Activated naive CD8-positive, alpha-beta T cell treated with anti-CD3 and anti-CD28 coated beads, Interleukin-2, amount 10 ng/mL, durations not matched to agents 7 days and 5 days (primary cell): ENCODE measurements at regions of chr9 and their contacts with region 1.

Region 1: DNA sequence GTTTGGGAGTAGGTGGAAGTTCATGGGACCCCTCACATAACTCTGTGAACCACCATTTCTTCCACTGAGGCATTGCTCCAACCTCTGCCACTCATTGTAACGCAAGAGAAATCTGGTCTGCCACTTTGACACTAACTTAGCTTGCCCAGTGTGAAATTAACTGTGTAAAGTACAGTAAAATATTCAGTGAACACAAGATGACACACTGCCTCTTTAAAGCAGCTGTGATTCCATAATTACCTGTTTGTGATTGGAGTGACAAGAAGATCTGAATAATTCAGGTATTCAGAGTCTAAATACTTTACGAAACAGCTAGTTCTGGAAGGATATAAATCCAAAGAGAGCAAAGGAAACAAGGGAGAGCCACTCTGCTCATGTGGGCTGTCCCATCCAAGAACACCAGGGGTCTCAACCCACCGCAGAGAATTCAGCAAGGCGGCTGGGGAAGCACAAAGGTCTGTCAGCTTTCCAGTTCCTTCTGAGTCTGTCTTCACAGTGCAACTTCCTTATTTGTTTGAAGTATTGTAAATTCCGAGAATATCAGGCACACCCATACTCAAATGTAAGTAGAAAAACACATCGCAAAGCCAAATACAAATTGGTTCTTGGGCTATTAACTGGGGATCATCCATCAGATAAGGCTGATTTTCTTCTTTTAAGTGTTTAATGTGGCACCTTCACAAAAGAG is 86.9 kb downstream of the GNAQ start:
- DNase-seq: no peak
- ATAC-seq: peak; percentile 50
- H3K4me3 Mint-ChIP-seq: peak overlapping the region; percentile 56
- H3K27ac Mint-ChIP-seq: peak overlapping the region; percentile 57
- H3K4me1 Mint-ChIP-seq: peaks cover 26% of the 10 kb centered on the region
- H3K27me3 Mint-ChIP-seq: no peaks in the 10 kb centered on the region

Region 2: DNA sequence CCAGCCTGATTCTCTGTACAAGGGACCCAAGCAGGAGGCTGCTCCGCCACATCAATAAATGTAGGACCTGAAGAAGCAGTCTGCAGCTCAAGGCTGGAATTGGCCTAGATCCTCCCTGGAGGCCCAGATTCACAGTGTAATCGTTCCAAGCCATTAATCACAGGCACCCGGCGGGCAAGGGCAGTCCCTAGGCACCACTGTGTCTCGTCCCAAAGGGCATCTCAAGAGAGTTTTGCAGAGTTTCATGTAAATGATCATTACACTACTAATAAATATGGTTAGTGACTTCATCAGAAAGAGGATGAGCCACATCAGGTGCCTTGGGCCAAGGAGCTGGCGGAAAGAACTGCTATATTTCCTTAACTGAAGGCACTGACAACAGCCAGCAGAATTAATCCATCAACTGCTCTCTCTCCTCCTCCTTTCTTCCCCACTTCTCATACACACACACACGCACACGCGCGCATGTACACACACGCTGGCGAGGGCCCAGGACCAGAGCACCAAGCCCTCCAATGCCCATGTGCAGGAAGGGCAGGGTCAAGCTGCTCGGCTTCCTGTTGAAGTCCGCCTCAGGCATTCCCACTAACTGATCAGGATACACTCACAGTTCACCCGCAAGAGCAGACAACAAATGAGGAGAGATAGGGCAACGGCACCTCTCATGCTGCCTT is 53.0 kb after region 1 on chr9:
- POLR2A ChIA-PET with region 1: interaction called, 11 read pairs
- DNase-seq: no peak
- ATAC-seq: no peak
- H3K4me3 Mint-ChIP-seq: no peak overlapping the region
- H3K27ac Mint-ChIP-seq: no peak overlapping the region
- H3K4me1 Mint-ChIP-seq: peaks cover 18% of the 10 kb centered on the region
- H3K27me3 Mint-ChIP-seq: no peaks in the 10 kb centered on the region